ENCODE measurements at regions of chr20 and their contacts with region 1.

Region 1: DNA sequence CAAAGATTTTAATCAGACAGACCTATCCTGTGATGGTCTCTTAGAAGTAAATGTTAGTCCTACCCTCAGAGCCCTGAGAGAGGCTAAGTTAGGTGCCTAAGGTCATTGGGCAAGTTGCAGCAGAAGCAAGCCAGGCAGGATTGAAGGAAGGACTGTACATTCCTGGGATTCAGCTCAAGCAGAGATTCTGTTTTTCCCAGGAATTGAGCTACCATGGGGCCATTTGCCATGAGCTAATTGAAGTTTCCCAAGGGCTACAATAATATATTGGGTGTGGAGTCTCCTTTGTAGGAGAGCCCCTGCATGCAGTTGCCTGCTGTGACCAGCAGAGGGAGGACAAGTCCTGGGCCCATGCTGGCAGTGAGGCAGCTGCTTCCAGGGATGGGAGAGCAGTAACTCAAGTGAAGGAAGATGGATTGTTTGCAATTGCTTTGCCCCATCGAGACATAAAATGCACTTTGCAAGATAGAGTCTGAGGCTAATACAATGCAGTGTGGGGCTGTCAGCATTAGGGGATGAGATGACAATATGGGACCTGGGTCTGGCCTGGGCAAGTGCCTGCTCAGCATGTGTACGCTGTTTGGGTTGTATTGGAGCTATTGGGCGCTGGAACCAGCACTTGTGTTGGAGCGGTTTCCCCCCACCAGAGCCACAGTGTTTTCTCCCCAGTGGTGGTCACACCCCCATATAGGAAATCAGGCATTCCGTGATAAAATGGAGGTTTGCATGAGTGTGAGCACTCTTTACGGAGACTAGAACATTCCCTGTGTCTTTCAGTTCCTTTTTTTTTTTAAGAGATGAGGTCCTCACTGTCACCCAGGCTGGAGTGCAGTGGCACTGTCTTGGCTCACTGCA is 27.9 kb downstream of the DNMT3B start:
- DNase-seq: no peak
- ATAC-seq: peak; percentile 96
- H3K4me3 ChIP-seq: no peak overlapping the region
- H3K27ac ChIP-seq: no peak overlapping the region
- H3K4me1 ChIP-seq: no peaks in the 10 kb centered on the region
- H3K27me3 ChIP-seq: no peaks in the 10 kb centered on the region
- CTCF ChIP-seq: peak; percentile 76 to 99 (median 97); a peak in 5 of 6 replicates
- POLR2A ChIP-seq: no peak
- RAD21 ChIP-seq: peak; percentile 73

Region 2: GRCh38 chr20:31923388-31924331 is 866.5 kb before region 1 on chr20:
- CTCF ChIA-PET with region 1: no interaction called
- POLR2A ChIA-PET with region 1: no interaction called
- RAD21 ChIA-PET with region 1: no interaction called
- intact Hi-C with region 1: no loop called
- DNase-seq: no peak
- ATAC-seq: no peak
- H3K4me3 ChIP-seq: no peak overlapping the region
- H3K27ac ChIP-seq: no peak overlapping the region
- H3K4me1 ChIP-seq: no peaks in the 10 kb centered on the region
- H3K27me3 ChIP-seq: no peaks in the 10 kb centered on the region
- CTCF ChIP-seq: no peak
- POLR2A ChIP-seq: no peak
- RAD21 ChIP-seq: no peak

Region 3: GRCh38 chr20:32894026-32894483 is 103.9 kb after region 1 on chr20:
- CTCF ChIA-PET with region 1: interaction called, 3 read pairs
- POLR2A ChIA-PET with region 1: no interaction called
- RAD21 ChIA-PET with region 1: interaction called in 1 of 2 experiments, 3 read pairs
- intact Hi-C with region 1: loop called (anchors 1 kb)
- DNase-seq: no peak
- ATAC-seq: peak; percentile 92
- H3K4me3 ChIP-seq: no peak overlapping the region
- H3K27ac ChIP-seq: no peak overlapping the region
- H3K4me1 ChIP-seq: no peaks in the 10 kb centered on the region
- H3K27me3 ChIP-seq: no peaks in the 10 kb centered on the region
- CTCF ChIP-seq: peak; percentile 34 to 80 (median 80); a peak in 5 of 6 replicates
- POLR2A ChIP-seq: no peak
- RAD21 ChIP-seq: peak; percentile 62

Region 4: GRCh38 chr20:33076662-33077372 is 286.7 kb after region 1 on chr20:
- CTCF ChIA-PET with region 1: no interaction called
- POLR2A ChIA-PET with region 1: no interaction called
- RAD21 ChIA-PET with region 1: no interaction called
- intact Hi-C with region 1: loop called (anchors 5 kb)
- DNase-seq: peak; percentile 35
- ATAC-seq: peak; percentile 96
- H3K4me3 ChIP-seq: no peak overlapping the region
- H3K27ac ChIP-seq: no peak overlapping the region
- H3K4me1 ChIP-seq: peaks cover 8 to 17% of the 10 kb centered on the region in 2 experiments; a peak in 3 of 4 replicates
- H3K27me3 ChIP-seq: no peaks in the 10 kb centered on the region
- CTCF ChIP-seq: peak; percentile 52 to 87 (median 80); a peak in 5 of 6 replicates
- POLR2A ChIP-seq: no peak
- RAD21 ChIP-seq: peak; percentile 63